MCF 10A (cell line): ENCODE measurements at regions of chr2 and their contacts with region 1.

Region 1: GRCh38 chr2:109604597-109604996 is 9.2 kb downstream of the SEPTIN10 start:
- DNase-seq: peak; percentile 81
- H3K4me3 Mint-ChIP-seq: peak overlapping the region; percentile 9
- H3K27ac Mint-ChIP-seq: peak overlapping the region; percentile 57
- H3K4me1 Mint-ChIP-seq: peaks cover 33% of the 10 kb centered on the region
- H3K27me3 Mint-ChIP-seq: no peaks in the 10 kb centered on the region
- CTCF ChIP-seq: no peak

Region 2: DNA sequence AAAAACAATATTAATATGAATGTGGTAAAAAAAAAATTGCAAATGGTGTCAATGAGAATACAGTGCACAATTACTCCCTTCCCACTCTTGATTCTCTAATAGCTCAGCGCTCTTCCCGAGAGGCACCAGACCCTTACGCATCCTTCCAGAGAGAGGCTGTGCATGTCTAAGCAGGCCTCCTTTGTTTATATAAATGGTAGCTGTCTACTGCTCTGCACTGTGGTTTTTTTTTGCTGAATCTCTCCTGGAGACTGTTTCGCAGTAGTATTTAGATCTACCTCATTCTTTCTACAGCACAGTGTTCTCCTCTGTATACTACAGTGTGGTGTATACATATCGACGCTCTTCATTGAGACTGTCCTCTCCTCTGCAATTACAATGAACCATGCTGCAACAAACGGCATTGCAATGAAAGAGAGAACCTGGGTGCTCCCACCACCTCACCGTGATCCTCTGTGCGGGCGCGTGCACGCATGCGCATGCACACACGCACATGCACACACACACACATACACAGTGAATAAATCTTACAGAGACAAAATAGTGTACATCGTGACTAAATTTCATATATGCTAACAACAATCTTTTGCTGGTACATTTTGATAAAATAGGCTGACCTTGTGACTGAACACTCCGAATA is 10.2 kb before region 1 on chr2:
- CTCF ChIA-PET with region 1: interaction called, 12 read pairs
- POLR2A ChIA-PET with region 1: interaction called, 7 read pairs
- intact Hi-C with region 1: no loop called
- DNase-seq: peak; percentile 14
- H3K4me3 Mint-ChIP-seq: no peak overlapping the region
- H3K27ac Mint-ChIP-seq: no peak overlapping the region
- H3K4me1 Mint-ChIP-seq: peaks cover 16% of the 10 kb centered on the region
- H3K27me3 Mint-ChIP-seq: no peaks in the 10 kb centered on the region
- CTCF ChIP-seq: no peak

Region 3: DNA sequence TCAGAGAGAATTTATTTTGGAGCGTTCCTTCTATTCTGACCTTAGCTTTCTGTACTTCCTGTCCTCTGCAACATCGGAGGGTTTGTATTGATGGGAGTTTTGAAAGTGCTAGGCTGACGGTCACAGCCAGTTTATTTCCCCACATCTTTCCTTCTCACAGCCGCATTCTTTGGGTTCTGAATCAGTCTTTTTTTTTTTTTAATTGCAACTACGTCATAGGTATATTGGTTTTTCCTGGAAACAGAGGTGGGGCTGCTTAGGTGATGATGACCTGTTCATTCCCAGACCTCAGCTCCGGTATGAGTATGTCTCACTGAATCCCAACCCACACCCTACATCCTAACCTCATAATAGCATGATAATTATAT is 98.0 kb after region 1 on chr2:
- CTCF ChIA-PET with region 1: interaction called, 4 read pairs
- POLR2A ChIA-PET with region 1: interaction called, 30 read pairs
- intact Hi-C with region 1: no loop called
- DNase-seq: peak; percentile 89
- H3K4me3 Mint-ChIP-seq: peak overlapping the region; percentile 68
- H3K27ac Mint-ChIP-seq: peak overlapping the region; percentile 97
- H3K4me1 Mint-ChIP-seq: peaks cover 40% of the 10 kb centered on the region
- H3K27me3 Mint-ChIP-seq: no peaks in the 10 kb centered on the region
- CTCF ChIP-seq: no peak